HEK293 (cell line): ENCODE measurements at regions of chr6 and their contacts with region 1.

Region 1: DNA sequence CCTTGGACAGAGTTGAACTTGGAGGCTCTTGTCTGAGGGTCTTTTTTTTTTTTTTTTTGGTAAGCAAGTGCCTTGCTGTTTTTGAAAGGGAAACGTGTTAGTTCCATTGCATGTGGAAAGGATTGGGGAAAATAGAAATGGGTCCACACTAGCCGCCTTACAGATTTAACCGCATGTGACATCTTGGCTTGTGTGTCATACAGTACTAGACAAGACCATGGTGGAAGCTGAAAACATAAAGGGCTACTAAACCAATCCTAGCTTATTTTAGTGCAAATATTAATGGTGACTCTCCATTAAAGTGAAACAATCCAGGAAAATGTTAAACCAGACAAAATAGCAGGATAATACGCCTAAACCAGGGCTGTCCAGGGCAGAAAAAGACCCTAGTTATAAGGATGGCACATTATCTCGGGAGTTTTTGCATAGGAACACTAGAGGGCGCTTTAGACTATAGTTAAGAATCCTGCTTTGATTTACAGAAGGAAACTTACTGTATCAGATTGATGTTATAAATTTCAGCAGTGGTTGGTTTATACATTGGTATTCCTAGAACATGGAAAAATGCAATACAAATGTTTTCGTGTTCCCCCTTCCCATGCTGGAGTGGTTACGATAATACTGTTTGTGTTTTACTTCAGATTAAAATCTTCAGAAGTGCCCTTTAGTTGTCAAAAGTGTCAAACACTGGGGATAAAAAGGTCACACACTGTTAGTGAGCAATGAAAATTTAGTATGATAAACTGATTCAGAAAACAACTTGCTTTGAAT is 59.8 kb upstream of the DEK start:
- H3K4me3 ChIP-seq: no peak overlapping the region
- H3K27ac ChIP-seq: no peak overlapping the region
- H3K4me1 ChIP-seq: peaks cover 4% of the 10 kb centered on the region; the same call in 1 of the 2 replicates
- CTCF ChIP-seq: no peak

Region 2: DNA sequence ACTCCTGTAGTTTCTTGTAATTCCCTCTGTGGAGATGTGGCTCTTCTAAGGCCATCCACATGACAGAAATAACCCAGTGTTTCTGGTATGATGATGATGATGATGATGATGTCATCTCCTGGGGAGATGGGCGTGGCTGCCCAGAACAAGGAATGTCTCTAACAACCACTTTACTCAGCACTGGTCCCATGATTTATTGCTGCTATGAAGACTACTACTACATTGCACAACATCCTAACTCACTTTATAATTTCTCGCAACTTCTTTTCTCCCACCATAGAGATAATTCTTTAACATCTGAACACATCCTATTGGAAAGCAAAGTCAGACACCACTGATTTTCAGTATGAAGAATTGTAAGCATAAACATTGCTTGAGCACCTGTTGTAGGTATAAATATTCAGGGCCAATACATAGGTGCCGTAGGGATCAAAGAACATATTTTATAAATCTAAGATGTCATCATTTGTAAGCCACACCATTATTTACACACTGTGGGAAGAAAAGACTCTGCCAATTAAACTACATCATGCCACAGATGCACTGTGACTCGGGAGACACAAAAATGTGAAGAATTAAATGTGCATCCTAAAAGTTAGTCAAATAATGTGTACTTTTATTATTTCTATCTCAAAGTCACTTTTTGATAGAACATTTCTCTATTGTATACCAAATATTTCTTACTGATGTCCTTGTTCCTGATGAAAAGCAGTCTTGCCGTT is 175.7 kb before region 1 on chr6:
- CTCF ChIA-PET with region 1: no interaction called
- POLR2A ChIA-PET with region 1: no interaction called
- H3K4me3 ChIP-seq: no peak overlapping the region
- H3K27ac ChIP-seq: no peak overlapping the region
- H3K4me1 ChIP-seq: peaks cover 2% of the 10 kb centered on the region; the same call in 1 of the 2 replicates
- CTCF ChIP-seq: no peak

Region 3: GRCh38 chr6:18306977-18307376 is 17.1 kb before region 1 on chr6:
- CTCF ChIA-PET with region 1: interaction called, 14 read pairs
- POLR2A ChIA-PET with region 1: no interaction called
- H3K4me3 ChIP-seq: no peak overlapping the region
- H3K27ac ChIP-seq: no peak overlapping the region
- H3K4me1 ChIP-seq: no peaks in the 10 kb centered on the region
- CTCF ChIP-seq: no peak

Region 4: DNA sequence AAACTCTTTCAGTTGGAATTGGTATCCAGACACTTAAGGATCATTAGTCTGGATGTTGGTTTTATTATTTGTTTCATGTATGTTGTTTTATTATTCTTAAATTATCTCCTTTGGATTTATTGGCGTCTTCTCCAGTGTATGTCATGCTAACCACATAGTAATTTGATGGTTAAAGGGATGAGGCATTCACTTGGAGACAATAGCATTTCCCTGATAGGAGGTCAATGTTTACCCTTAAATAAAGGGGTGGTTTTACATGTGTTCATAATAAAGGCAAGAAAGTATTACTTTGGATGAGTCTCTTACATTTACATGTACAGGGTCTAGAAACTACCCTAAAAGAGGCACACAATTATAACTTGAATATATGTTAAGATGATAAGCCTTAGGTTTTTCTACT is 11.8 kb after region 1 on chr6:
- CTCF ChIA-PET with region 1: interaction called, 31 read pairs
- POLR2A ChIA-PET with region 1: no interaction called
- H3K4me3 ChIP-seq: no peak overlapping the region
- H3K27ac ChIP-seq: no peak overlapping the region
- H3K4me1 ChIP-seq: no peaks in the 10 kb centered on the region
- CTCF ChIP-seq: no peak

Region 5: DNA sequence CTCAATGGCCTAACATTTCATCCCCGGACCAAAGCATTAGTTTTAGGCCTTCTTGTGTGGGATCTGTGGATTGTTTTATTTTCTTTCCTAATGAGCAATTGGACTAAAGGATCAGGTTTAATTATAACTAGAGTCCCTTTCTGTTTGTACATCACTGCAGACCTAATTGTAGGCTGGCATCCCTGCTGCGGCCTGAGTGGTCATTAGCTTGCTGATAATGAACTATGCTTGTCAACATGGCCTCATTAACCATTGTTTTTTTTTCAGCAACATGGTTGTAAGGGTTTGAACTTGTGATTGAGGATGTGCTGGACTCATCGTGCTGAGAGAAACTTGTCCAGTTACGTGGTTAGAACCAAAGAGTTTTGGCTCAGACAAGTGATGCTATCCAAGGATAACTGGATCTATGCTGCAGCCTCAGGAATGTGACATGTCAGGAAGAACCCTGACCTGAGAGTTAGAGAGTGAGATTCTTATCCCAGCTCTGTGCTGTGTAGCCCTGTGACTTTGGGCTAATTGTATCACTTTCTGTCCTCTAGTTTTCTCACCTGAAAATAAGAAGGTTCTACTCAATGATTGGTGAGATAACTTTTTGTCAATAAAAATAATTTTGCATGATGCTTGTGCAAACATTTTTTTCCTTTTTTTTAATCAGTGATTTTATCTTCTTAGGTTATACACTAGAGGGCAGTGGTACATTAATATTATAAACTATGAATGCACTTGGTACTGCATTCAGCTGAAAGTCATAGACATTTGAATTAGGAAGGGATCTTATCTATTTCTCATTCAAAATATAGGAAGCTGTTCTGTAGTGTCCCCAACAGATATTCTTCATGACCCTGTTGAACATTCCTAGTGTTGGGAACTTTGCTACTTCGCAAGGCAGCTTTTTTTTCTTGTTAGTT is 204.0 kb after region 1 on chr6:
- CTCF ChIA-PET with region 1: interaction called, 14 read pairs
- POLR2A ChIA-PET with region 1: interaction called, 3 read pairs
- H3K4me3 ChIP-seq: no peak overlapping the region
- H3K27ac ChIP-seq: no peak overlapping the region
- H3K4me1 ChIP-seq: no peaks in the 10 kb centered on the region
- CTCF ChIP-seq: no peak